ENCODE measurements at regions of chr3 and their contacts with region 1.

Region 1: DNA sequence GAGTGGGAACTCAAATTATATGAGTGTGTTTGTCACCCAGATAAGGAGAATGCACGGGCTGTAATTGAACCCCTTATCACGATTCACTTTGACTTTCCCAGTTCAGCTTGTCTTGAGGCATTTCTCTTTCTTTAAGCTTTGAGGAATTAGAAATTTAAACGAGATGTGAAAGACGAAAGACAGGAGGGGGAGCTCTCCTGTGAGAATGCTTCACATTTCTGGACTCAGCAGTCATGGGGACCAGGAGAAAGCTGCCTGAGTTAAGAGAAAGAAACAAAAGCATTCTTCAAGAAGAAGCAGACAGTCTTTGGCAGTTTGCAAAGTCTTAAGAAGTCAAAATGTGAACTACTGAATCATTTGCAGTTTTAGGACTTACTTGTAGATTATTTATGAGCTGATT is 205.6 kb downstream of the NECTIN3 start:
- DNase-seq: peak; percentile 29
- H3K4me3 ChIP-seq: no peak overlapping the region
- H3K27ac ChIP-seq: no peak overlapping the region
- H3K27me3 ChIP-seq: no peaks in the 10 kb centered on the region
- CTCF ChIP-seq: peak; percentile 50

Region 2: GRCh38 chr3:111299068-111299672 is 21.9 kb after region 1 on chr3:
- CTCF ChIA-PET with region 1: no interaction called
- POLR2A ChIA-PET with region 1: no interaction called
- DNase-seq: no peak
- H3K4me3 ChIP-seq: no peak overlapping the region
- H3K27ac ChIP-seq: no peak overlapping the region
- H3K27me3 ChIP-seq: no peaks in the 10 kb centered on the region
- CTCF ChIP-seq: peak; percentile 33

Region 3: DNA sequence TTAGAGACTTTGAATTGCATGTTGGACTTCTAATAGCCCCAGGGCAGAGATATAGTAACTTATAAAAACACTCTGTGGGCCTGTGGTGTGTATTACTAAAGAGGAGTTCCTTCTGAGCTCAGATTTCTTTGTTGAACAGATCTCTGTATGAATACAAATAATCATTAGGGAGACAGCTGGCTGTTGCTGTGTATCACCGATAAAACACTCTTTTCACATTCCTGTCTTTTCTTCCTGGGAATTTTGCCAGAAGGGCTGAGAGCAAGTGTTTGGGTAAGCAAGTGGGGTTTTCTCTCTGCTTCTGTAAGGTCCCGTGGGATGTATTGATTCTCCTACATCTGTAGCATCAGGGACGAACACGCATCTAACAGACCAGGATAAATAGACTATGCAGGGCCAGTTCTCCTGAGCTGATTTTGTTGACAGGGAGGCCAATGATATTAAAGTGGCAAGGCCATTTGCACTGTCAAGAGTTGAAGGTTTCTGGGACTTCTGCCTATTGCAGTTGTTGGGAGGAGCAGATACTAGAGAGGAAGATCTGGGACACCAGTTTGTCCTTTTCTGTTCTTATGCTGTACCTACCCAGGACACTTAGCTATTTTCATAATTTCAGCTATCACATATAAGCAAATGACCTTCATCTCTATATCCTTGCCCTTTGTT is 38.8 kb after region 1 on chr3:
- CTCF ChIA-PET with region 1: interaction called, 13 read pairs
- POLR2A ChIA-PET with region 1: no interaction called
- DNase-seq: peak; percentile 89
- H3K4me3 ChIP-seq: no peak overlapping the region
- H3K27ac ChIP-seq: no peak overlapping the region
- H3K27me3 ChIP-seq: no peaks in the 10 kb centered on the region
- CTCF ChIP-seq: no peak

Region 4: GRCh38 chr3:111338059-111338698 is 61.0 kb after region 1 on chr3:
- CTCF ChIA-PET with region 1: interaction called, 24 read pairs
- POLR2A ChIA-PET with region 1: no interaction called
- DNase-seq: peak; percentile 69
- H3K4me3 ChIP-seq: no peak overlapping the region
- H3K27ac ChIP-seq: no peak overlapping the region
- H3K27me3 ChIP-seq: no peaks in the 10 kb centered on the region
- CTCF ChIP-seq: peak; percentile 92

Measured in AG04450 (cell line).